ENCODE measurements at regions of chr6 and their contacts with region 1.

Region 1: DNA sequence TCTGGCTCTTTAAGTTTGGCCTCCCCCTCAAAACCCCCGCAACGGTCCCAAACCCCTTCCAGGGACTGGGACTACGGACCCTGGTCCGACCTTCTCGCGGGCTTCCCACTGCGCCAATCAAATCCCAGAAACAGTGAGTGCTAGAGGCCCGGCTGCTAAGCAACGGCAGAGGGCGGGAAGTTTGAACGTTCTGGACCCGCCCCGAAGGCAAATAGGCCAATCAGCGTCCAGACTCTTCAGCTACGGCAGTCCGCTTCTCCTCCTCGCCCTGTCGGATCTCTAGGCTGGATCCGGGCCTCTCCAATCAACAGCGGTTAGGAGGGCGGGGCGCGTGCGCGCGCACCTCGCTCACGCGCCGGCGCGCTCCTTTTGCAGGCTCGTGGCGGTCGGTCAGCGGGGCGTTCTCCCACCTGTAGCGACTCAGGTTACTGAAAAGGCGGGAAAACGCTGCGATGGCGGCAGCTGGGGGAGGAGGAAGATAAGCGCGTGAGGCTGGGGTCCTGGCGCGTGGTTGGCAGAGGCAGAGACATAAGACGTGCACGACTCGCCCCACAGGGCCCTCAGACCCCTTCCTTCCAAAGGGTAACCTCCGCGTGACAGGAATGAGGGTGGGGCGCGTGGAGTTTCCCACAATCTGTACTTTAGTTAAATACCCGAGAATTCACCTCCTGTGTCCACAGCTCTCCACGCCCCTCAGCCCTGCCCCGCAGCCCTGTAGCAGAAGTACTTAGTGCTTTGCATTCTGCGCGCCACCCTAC is at the start of gene MSH5:
- DNase-seq: peak; percentile 86 to 98 (median 94)
- ATAC-seq: peak; percentile 86
- H3K4me3 ChIP-seq: peak within 1 kb of the TSS; percentile 81 to 85
- H3K4me3 Mint-ChIP-seq: peak within 1 kb of the TSS; percentile 98
- H3K27ac ChIP-seq: peak within 1 kb of the TSS; percentile 28 to 94
- H3K27ac Mint-ChIP-seq: peak within 1 kb of the TSS; percentile 90
- H3K4me1 ChIP-seq: peaks cover 43% of the 10 kb centered on the region
- H3K4me1 Mint-ChIP-seq: peaks cover 56% of the 10 kb centered on the region
- H3K27me3 ChIP-seq: no peaks in the 10 kb centered on the region
- H3K27me3 Mint-ChIP-seq: no peaks in the 10 kb centered on the region
- CTCF ChIP-seq: no peak
- total RNA-seq, gene MSH5: 7.5 to 8.4 TPM

Region 2: GRCh38 chr6:31619805-31620585 is 119.8 kb before region 1 on chr6:
- CTCF ChIA-PET with region 1: no interaction called
- POLR2A ChIA-PET with region 1: interaction called, 4 read pairs
- intact Hi-C with region 1: loop called in 1 of 2 experiments (anchors 1 kb)
- DNase-seq: peak; percentile 94 to 99 (median 96)
- ATAC-seq: peak; percentile 80
- H3K4me3 ChIP-seq: peak overlapping the region; percentile 83 to 96
- H3K4me3 Mint-ChIP-seq: peak overlapping the region; percentile 91
- H3K27ac ChIP-seq: peak overlapping the region; percentile 95 to 99
- H3K27ac Mint-ChIP-seq: peak overlapping the region; percentile 96
- H3K4me1 ChIP-seq: peaks cover 37% of the 10 kb centered on the region
- H3K4me1 Mint-ChIP-seq: peaks cover 52% of the 10 kb centered on the region
- H3K27me3 ChIP-seq: no peaks in the 10 kb centered on the region
- H3K27me3 Mint-ChIP-seq: no peaks in the 10 kb centered on the region
- CTCF ChIP-seq: no peak

Region 3: GRCh38 chr6:31729515-31729978 is 10.3 kb before region 1 on chr6:
- CTCF ChIA-PET with region 1: interaction called, 41 read pairs
- POLR2A ChIA-PET with region 1: interaction called, 8 read pairs
- intact Hi-C with region 1: loop called in 1 of 2 experiments (anchors 1 kb)
- DNase-seq: peak; percentile 60 to 89 (median 83)
- ATAC-seq: peak; percentile 69
- H3K4me3 ChIP-seq: peak overlapping the region; percentile 79 to 96
- H3K4me3 Mint-ChIP-seq: peak overlapping the region; percentile 97
- H3K27ac ChIP-seq: peak overlapping the region; percentile 11 to 58
- H3K27ac Mint-ChIP-seq: peak overlapping the region; percentile 89
- H3K4me1 ChIP-seq: peaks cover 35% of the 10 kb centered on the region
- H3K4me1 Mint-ChIP-seq: peaks cover 57% of the 10 kb centered on the region
- H3K27me3 ChIP-seq: no peaks in the 10 kb centered on the region
- H3K27me3 Mint-ChIP-seq: no peaks in the 10 kb centered on the region
- CTCF ChIP-seq: peak; percentile 91

Region 4: DNA sequence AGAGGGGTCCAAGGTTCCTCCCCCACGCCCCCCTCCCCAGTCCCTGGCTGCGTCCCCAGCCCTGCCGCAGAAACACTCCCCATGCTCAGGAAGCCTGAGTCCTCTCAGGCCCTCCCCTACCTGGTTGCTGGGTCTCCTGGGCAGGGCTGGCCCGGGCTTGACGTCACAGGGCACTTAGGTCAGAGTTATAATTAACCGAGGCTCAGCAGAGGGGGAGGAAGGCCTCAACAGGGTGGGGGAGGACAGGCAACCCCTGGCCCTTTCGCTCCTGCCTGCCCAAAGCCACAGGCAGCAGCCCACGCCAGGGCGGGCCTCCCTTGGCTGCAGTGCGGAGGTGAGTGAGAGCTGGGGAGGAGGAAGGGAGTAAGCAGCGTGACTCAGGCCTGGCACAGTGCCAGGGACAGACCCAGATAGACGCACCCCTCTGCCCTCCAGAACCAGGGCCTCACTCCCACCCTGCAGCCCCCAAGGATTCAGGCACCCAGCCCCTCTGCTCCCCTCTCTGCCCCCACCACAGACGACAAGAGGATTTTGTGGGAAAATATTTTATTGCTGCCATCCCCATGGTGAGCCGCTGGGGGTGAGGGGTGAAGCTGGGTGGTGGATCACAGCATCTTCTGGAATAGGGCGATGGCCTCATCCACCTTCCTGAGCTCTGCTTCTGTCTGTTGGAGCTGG is 37.3 kb after region 1 on chr6 and contains the start of gene VWA7:
- CTCF ChIA-PET with region 1: interaction called, 4 read pairs
- POLR2A ChIA-PET with region 1: interaction called, 5 read pairs
- intact Hi-C with region 1: loop called in 1 of 2 experiments (anchors 1 kb)
- DNase-seq: peak; percentile 28 to 81 (median 64)
- ATAC-seq: peak; percentile 85
- H3K4me3 ChIP-seq: no peak within 1 kb of the TSS
- H3K4me3 Mint-ChIP-seq: peak within 1 kb of the TSS; percentile 29
- H3K27ac ChIP-seq: peak within 1 kb of the TSS in 1 of 2 experiments; percentile 62
- H3K27ac Mint-ChIP-seq: no peak within 1 kb of the TSS
- H3K4me1 ChIP-seq: peaks cover 29% of the 10 kb centered on the region
- H3K4me1 Mint-ChIP-seq: peaks cover 29% of the 10 kb centered on the region
- H3K27me3 ChIP-seq: no peaks in the 10 kb centered on the region
- H3K27me3 Mint-ChIP-seq: no peaks in the 10 kb centered on the region
- CTCF ChIP-seq: no peak
- total RNA-seq, gene VWA7: 0.65 to 1.2 TPM

Region 5: GRCh38 chr6:31827286-31828079 is 87.7 kb after region 1 on chr6 and contains the start of gene HSPA1B:
- CTCF ChIA-PET with region 1: interaction called, 15 read pairs
- POLR2A ChIA-PET with region 1: interaction called, 7 read pairs
- intact Hi-C with region 1: no loop called
- DNase-seq: peak; percentile 56 to 91 (median 85)
- ATAC-seq: peak; percentile 63
- H3K4me3 ChIP-seq: peak within 1 kb of the TSS; percentile 60 to 95
- H3K4me3 Mint-ChIP-seq: peak within 1 kb of the TSS; percentile 96
- H3K27ac ChIP-seq: peak within 1 kb of the TSS; percentile 66 to 72
- H3K27ac Mint-ChIP-seq: peak within 1 kb of the TSS; percentile 94
- H3K4me1 ChIP-seq: peaks cover 25% of the 10 kb centered on the region
- H3K4me1 Mint-ChIP-seq: peaks cover 38% of the 10 kb centered on the region
- H3K27me3 ChIP-seq: no peaks in the 10 kb centered on the region
- H3K27me3 Mint-ChIP-seq: no peaks in the 10 kb centered on the region
- CTCF ChIP-seq: no peak
- total RNA-seq, gene HSPA1B: 4.9 to 5.2 TPM

Region 6: DNA sequence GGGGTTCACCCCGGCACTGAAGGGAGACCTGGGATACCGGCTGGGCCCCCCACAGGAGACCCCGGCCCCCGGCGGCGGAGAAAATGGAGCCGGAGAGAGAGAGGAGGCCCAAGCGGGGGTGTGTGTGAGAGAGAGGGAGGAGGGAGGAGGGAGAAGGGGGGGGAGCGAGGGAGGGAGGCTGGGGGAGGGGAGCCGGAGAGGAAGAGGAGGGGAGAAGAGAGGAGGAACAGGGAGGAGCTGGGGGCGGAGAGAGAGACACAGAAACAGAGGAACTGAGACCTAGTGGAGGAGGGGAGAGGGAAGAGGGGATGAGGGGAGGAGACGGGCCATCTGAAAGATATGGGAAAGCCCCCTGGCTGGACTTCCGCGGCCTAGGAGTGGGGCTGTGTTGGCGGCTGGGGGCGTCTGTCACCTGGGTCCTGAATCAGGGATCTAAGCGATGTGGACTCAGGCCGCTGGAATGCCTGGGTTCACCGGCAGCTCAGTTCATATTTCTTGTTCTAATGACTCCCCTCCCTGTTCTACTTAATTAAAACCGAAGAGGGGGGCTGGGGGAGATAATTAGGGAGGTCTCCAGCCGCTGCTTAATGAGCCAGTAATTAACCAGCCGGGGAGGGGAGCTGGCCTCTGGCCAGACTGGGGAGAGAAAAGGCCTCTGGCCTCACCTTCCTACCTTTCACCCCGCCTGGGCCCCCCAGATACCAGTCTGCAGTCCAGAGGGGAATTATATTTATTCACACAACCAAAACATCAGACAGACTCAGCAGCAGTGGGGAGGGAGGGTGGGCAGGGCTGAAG is 450.4 kb after region 1 on chr6 and contains the start of gene PBX2:
- CTCF ChIA-PET with region 1: no interaction called
- POLR2A ChIA-PET with region 1: no interaction called
- intact Hi-C with region 1: loop called in 1 of 2 experiments (anchors 5 kb)
- DNase-seq: peak; percentile 52 to 93 (median 86)
- ATAC-seq: peak; percentile 52
- H3K4me3 ChIP-seq: peak within 1 kb of the TSS; percentile 78 to 82
- H3K4me3 Mint-ChIP-seq: peak within 1 kb of the TSS; percentile 99
- H3K27ac ChIP-seq: peak within 1 kb of the TSS; percentile 73 to 97
- H3K27ac Mint-ChIP-seq: peak within 1 kb of the TSS; percentile 97
- H3K4me1 ChIP-seq: peaks cover 59% of the 10 kb centered on the region
- H3K4me1 Mint-ChIP-seq: peaks cover 64% of the 10 kb centered on the region
- H3K27me3 ChIP-seq: no peaks in the 10 kb centered on the region
- H3K27me3 Mint-ChIP-seq: no peaks in the 10 kb centered on the region
- CTCF ChIP-seq: no peak
- total RNA-seq, gene PBX2: 53.3 to 54.4 TPM